ENCODE measurements at regions of chr18 and their contacts with region 1.

Region 1: GRCh38 chr18:31162419-31162793 is 250 bp downstream of the DSC1 start:
- DNase-seq: no peak
- ATAC-seq: peak; percentile 21
- H3K4me3 ChIP-seq: peak overlapping the region; percentile 28
- H3K4me3 Mint-ChIP-seq: peak overlapping the region in 9 of 10 donors; percentile 50 to 88 (median 82)
- H3K27ac ChIP-seq: peak overlapping the region; percentile 70
- H3K27ac Mint-ChIP-seq: peak overlapping the region in 8 of 9 donors; percentile 43 to 94 (median 89)
- H3K4me1 ChIP-seq: no peaks in the 10 kb centered on the region
- H3K4me1 Mint-ChIP-seq: peaks cover 0 to 24% (median 9%) of the 10 kb centered on the region in 7 donors
- H3K27me3 ChIP-seq: no peaks in the 10 kb centered on the region
- H3K27me3 Mint-ChIP-seq: no peaks in the 10 kb centered on the region

Region 2: GRCh38 chr18:31274915-31275314 is 112.5 kb after region 1 on chr18:
- CTCF ChIA-PET with region 1: no interaction called
- POLR2A ChIA-PET with region 1: no interaction called
- intact Hi-C with region 1: loop called in 1 of 2 experiments (anchors 2 kb)
- DNase-seq: no peak
- ATAC-seq: no peak
- H3K4me3 ChIP-seq: no peak overlapping the region
- H3K4me3 Mint-ChIP-seq: no peak overlapping the region
- H3K27ac ChIP-seq: no peak overlapping the region
- H3K27ac Mint-ChIP-seq: no peak overlapping the region
- H3K4me1 ChIP-seq: no peaks in the 10 kb centered on the region
- H3K4me1 Mint-ChIP-seq: no peaks in the 10 kb centered on the region
- H3K27me3 ChIP-seq: no peaks in the 10 kb centered on the region
- H3K27me3 Mint-ChIP-seq: no peaks in the 10 kb centered on the region

Region 3: GRCh38 chr18:31429621-31430020 is 267.2 kb after region 1 on chr18:
- CTCF ChIA-PET with region 1: no interaction called
- POLR2A ChIA-PET with region 1: no interaction called
- intact Hi-C with region 1: no loop called
- DNase-seq: no peak
- ATAC-seq: no peak
- H3K4me3 ChIP-seq: no peak overlapping the region
- H3K4me3 Mint-ChIP-seq: no peak overlapping the region
- H3K27ac ChIP-seq: no peak overlapping the region
- H3K27ac Mint-ChIP-seq: no peak overlapping the region
- H3K4me1 ChIP-seq: no peaks in the 10 kb centered on the region
- H3K4me1 Mint-ChIP-seq: no peaks in the 10 kb centered on the region
- H3K27me3 ChIP-seq: no peaks in the 10 kb centered on the region
- H3K27me3 Mint-ChIP-seq: no peaks in the 10 kb centered on the region

Region 4: GRCh38 chr18:31497837-31498573 is 335.6 kb after region 1 on chr18 and contains the start of gene DSG2:
- CTCF ChIA-PET with region 1: no interaction called
- POLR2A ChIA-PET with region 1: no interaction called
- intact Hi-C with region 1: loop called in 1 of 2 experiments (anchors 2 kb)
- DNase-seq: peak in 7 of 9 donors; percentile 1 to 34 (median 7)
- ATAC-seq: peak; percentile 73
- H3K4me3 ChIP-seq: no peak within 1 kb of the TSS
- H3K4me3 Mint-ChIP-seq: peak within 1 kb of the TSS; percentile 54 to 84 (median 80)
- H3K27ac ChIP-seq: no peak within 1 kb of the TSS
- H3K27ac Mint-ChIP-seq: no peak within 1 kb of the TSS
- H3K4me1 ChIP-seq: no peaks in the 10 kb centered on the region
- H3K4me1 Mint-ChIP-seq: peaks cover 0 to 12% (median 8%) of the 10 kb centered on the region in 7 donors
- H3K27me3 ChIP-seq: peaks cover 0 to 6% of the 10 kb centered on the region in 2 donors
- H3K27me3 Mint-ChIP-seq: peaks cover 45 to 53% (median 52%) of the 10 kb centered on the region in 5 donors
- total RNA-seq, gene DSG2: 0.13 to 0.53 (median 0.29) TPM